Activated CD8-positive, alpha-beta T cell treated with anti-CD3 and anti-CD28 coated beads for 36 hours (primary cell): ENCODE measurements at regions of chr11 and their contacts with region 1.

Region 1: GRCh38 chr11:67366546-67366945 is 6.9 kb downstream of the CLCF1 start:
- DNase-seq: no peak
- ATAC-seq: no peak
- H3K4me3 Mint-ChIP-seq: no peak overlapping the region
- H3K27ac Mint-ChIP-seq: no peak overlapping the region
- H3K4me1 Mint-ChIP-seq: peaks cover 44% of the 10 kb centered on the region
- H3K27me3 Mint-ChIP-seq: peaks cover 8% of the 10 kb centered on the region
- CTCF ChIP-seq: no peak

Region 2: DNA sequence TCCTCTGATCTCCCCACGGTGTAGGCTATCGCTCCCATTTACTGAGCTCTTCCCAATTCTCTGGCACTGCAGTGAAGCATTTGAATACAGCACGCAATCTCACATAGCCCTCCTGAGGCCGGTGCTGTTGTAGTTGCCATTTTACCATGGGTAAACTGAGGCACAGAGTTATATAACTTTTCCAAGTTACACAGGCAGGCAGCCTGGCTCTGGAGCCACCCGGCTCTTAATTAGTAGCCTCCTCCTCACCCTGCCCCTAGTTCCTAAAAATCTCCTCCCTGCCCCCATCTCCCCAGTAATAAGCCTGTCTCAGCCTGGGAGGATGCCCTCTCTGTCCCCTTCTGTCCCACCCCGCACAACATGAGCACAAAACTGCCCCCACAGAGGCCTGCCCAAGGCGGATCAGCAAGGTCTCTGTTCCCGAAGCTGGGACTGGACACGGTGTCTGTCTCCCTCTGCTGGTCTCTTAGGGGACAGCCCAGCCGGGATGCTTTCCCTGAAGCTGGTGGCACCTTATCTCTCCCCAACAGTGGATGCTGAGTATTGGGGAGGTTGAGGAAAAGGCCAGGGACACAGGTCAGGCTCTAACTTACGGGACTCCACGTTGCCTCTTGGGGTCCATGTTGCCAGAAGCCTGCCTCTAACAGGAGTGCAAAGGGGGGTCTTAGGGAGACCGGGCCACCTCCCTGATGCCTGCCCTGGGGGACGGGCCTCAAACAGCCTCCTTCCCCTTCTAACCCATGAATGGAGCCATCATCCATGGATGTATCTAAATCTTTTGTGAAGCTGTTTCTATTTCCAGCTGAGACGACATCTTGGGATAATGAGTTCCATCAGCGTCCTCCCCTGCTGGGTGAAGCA is 16.0 kb after region 1 on chr11:
- CTCF ChIA-PET with region 1: interaction called, 70 read pairs
- POLR2A ChIA-PET with region 1: interaction called, 8 read pairs
- intact Hi-C with region 1: no loop called
- DNase-seq: peak; percentile 90
- ATAC-seq: peak; percentile 95
- H3K4me3 Mint-ChIP-seq: no peak overlapping the region
- H3K27ac Mint-ChIP-seq: no peak overlapping the region
- H3K4me1 Mint-ChIP-seq: peaks cover 2% of the 10 kb centered on the region
- H3K27me3 Mint-ChIP-seq: no peaks in the 10 kb centered on the region
- CTCF ChIP-seq: peak; percentile 94